Panc1 (cell line): ENCODE measurements at regions of chr1 and their contacts with region 1.

Region 1: DNA sequence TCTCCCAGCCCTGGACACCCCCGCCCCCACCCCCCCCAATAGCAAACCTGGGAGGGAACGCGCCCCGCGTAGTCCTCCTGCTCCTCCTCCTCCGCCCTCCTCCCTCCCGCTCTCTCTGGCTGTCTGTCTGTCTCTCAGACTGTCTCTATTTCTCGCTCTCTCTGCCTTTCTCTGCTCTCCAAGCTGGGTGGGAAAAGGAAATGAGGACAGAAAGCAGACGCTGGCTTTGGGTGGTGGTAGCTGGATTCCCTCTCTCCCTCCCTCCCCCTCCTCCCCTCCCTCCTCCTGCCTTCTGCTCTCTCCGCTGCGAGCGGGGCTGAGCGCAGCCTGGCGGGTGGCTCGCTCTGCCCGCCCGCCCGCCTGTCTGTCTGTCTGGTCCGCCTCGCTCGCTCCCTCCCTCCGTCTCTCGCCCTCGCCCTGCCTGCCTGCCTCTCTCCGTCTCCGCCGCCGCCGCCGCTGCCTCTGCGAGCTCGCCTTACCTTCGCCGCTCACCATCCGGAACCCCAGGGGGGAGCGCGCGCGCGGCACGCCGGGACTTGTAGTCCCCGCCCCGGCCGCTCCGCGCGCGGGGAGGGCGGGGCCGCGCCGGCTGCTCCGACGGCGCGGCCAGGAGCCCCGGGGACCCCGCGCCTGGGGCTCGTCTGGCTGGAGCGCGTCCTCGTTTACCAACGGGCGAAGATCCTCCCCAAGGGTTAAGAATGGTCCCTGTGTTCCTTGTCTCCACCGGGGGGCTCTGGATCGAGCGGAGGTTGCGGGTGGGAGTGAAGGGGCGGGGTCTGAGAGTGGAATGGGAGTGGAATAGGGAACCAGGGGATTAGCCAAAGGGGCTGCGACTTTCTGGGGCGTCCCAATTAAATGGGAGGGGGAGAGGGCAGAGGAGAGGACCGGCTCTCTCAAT is at the start of gene AHDC1:
- DNase-seq: no peak
- ATAC-seq: peak; percentile 79
- H3K4me3 ChIP-seq: peak within 1 kb of the TSS; percentile 78 to 86
- H3K27ac ChIP-seq: peak within 1 kb of the TSS; percentile 58; the same call in 1 of the 2 replicates
- H3K4me1 ChIP-seq: peaks cover 44% of the 10 kb centered on the region
- H3K27me3 ChIP-seq: no peaks in the 10 kb centered on the region
- CTCF ChIP-seq: no peak
- total RNA-seq, gene AHDC1: 47.1 TPM

Region 2: GRCh38 chr1:27275696-27276095 is 328.2 kb before region 1 on chr1:
- CTCF ChIA-PET with region 1: no interaction called
- POLR2A ChIA-PET with region 1: no interaction called
- in situ Hi-C with region 1: no loop called
- intact Hi-C with region 1: no loop called
- DNase-seq: no peak
- ATAC-seq: no peak
- H3K4me3 ChIP-seq: no peak overlapping the region
- H3K27ac ChIP-seq: no peak overlapping the region
- H3K4me1 ChIP-seq: no peaks in the 10 kb centered on the region
- H3K27me3 ChIP-seq: no peaks in the 10 kb centered on the region
- CTCF ChIP-seq: no peak

Region 3: DNA sequence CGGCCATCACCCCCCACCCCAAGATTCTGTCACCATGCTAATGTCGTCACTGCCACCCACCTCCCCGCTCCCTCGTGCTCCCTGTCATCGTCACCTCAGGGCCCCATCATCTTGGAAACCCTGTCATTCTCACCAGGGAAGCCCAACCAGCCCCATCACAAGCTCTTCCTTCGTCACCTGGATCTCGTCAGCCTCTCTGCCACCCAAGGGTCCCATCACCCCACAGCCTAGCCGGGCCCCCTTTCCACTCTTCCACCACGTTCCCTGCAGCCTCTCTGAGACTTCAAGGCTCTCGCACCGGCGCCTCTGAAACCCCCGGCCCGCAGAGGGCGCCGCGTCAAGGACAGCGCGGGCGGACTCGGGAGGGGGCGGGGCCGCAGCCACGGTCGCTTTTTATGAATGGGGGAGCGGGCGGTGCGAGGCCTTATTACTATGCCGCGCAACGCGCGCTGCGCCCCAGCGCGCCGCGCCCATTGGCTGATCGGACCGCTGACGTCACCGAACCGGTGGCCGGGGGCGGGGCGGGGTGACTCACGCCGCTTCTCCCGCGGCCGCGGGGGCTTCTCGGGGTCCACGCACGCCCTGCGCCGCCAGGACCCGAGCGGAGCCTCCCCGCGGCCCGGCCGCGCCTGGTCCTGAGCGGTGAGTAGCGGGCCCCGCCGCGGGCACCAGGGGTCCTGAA is 211.7 kb before region 1 on chr1 and contains the start of gene GPR3:
- CTCF ChIA-PET with region 1: interaction called, 5 read pairs
- POLR2A ChIA-PET with region 1: no interaction called
- in situ Hi-C with region 1: no loop called
- intact Hi-C with region 1: loop called (anchors 5 kb)
- DNase-seq: no peak
- ATAC-seq: peak; percentile 96
- H3K4me3 ChIP-seq: peak within 1 kb of the TSS; percentile 65 to 71
- H3K27ac ChIP-seq: peak within 1 kb of the TSS; percentile 69
- H3K4me1 ChIP-seq: peaks cover 6% of the 10 kb centered on the region
- H3K27me3 ChIP-seq: no peaks in the 10 kb centered on the region
- CTCF ChIP-seq: peak; percentile 86
- total RNA-seq, gene GPR3: 0.95 TPM

Region 4: GRCh38 chr1:27556781-27557595 is 46.9 kb before region 1 on chr1:
- CTCF ChIA-PET with region 1: interaction called, 19 read pairs
- POLR2A ChIA-PET with region 1: interaction called, 4 read pairs
- in situ Hi-C with region 1: no loop called
- intact Hi-C with region 1: loop called (anchors 5 kb)
- DNase-seq: no peak
- ATAC-seq: peak; percentile 77
- H3K4me3 ChIP-seq: no peak overlapping the region
- H3K27ac ChIP-seq: peak overlapping the region; percentile 78; the same call in 1 of the 2 replicates
- H3K4me1 ChIP-seq: peaks cover 52% of the 10 kb centered on the region
- H3K27me3 ChIP-seq: no peaks in the 10 kb centered on the region
- CTCF ChIP-seq: peak; percentile 93

Region 5: GRCh38 chr1:27662707-27663393 is 58.9 kb after region 1 on chr1:
- CTCF ChIA-PET with region 1: interaction called, 9 read pairs
- POLR2A ChIA-PET with region 1: interaction called, 13 read pairs
- in situ Hi-C with region 1: no loop called
- intact Hi-C with region 1: loop called (anchors 1 kb)
- DNase-seq: peak; percentile 79
- ATAC-seq: peak; percentile 78
- H3K4me3 ChIP-seq: no peak overlapping the region
- H3K27ac ChIP-seq: peak overlapping the region; percentile 42
- H3K4me1 ChIP-seq: peaks cover 18% of the 10 kb centered on the region
- H3K27me3 ChIP-seq: no peaks in the 10 kb centered on the region
- CTCF ChIP-seq: peak; percentile 93

Region 6: DNA sequence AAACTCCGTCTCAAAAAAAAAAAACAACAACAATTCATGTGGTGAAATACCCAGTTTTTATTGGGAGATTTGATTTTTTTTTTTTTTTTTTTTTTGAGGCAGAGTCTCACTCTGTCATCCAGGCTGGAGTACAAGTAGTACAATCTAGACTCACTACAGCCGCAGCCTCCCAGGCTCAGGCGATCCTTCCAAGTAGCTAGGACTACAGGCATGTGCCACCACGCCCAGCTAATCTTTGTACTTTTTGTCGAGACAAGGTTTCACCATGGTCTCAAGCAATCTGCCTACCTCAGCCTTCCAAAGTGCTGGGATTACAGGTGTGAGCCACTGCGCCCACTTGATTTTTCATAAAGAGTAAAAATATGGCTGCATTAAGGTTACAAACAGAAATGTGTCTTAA is 137.2 kb after region 1 on chr1:
- CTCF ChIA-PET with region 1: no interaction called
- POLR2A ChIA-PET with region 1: no interaction called
- in situ Hi-C with region 1: no loop called
- intact Hi-C with region 1: no loop called
- DNase-seq: no peak
- ATAC-seq: no peak
- H3K4me3 ChIP-seq: no peak overlapping the region
- H3K27ac ChIP-seq: no peak overlapping the region
- H3K4me1 ChIP-seq: no peaks in the 10 kb centered on the region
- H3K27me3 ChIP-seq: no peaks in the 10 kb centered on the region
- CTCF ChIP-seq: no peak

Region 7: GRCh38 chr1:28341591-28341990 is 737.7 kb after region 1 on chr1:
- CTCF ChIA-PET with region 1: no interaction called
- POLR2A ChIA-PET with region 1: interaction called, 17 read pairs
- in situ Hi-C with region 1: no loop called
- intact Hi-C with region 1: no loop called
- DNase-seq: no peak
- ATAC-seq: no peak
- H3K4me3 ChIP-seq: no peak overlapping the region
- H3K27ac ChIP-seq: no peak overlapping the region
- H3K4me1 ChIP-seq: no peaks in the 10 kb centered on the region
- H3K27me3 ChIP-seq: no peaks in the 10 kb centered on the region
- CTCF ChIP-seq: no peak